ENCODE measurements at regions of chr20 and their contacts with region 1.

Region 1: GRCh38 chr20:44747166-44748004 is 1.7 kb downstream of the KCNK15 start:
- DNase-seq: peak; percentile 75 to 81
- ATAC-seq: peak; percentile 61 to 80 (median 70)
- H3K4me3 ChIP-seq: no peak overlapping the region
- H3K27ac ChIP-seq: no peak overlapping the region
- H3K4me1 ChIP-seq: peaks cover 11% of the 10 kb centered on the region
- H3K27me3 ChIP-seq: peaks cover 0 to 44% (median 4%) of the 10 kb centered on the region in 3 donors
- CTCF ChIP-seq: peak; percentile 56

Region 2: DNA sequence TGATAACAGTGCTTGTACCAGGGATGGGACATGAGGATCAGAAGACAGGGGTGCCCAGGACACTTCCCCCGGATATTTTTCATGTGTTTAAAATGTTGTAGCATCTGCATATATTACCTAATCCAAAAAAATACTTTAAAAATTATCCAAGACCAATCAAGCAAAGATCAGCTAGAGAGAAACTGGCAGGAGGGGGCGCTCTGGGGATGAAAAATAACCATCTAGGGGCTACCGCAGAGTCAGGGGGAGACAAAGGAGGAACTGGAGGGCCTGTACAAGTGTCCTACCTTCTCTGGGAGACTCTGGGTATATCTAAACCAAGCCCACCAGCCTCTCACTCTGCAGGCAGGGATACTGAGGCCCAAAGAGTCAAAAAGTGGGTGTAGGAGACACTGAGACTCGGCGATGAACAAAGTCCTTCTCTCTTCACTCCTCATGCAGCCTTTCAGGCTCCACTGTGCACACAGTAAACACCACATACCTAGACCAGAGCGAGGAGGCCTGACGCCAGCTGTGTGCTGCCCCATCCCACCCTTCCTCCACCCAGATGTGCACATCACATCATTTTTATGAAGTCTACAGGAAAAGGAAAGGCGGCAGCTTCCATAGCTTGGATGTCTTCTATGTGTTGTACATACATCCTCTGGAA is 53.1 kb after region 1 on chr20:
- intact Hi-C with region 1: loop called in 1 of 2 experiments (anchors 5 kb)
- DNase-seq: no peak
- ATAC-seq: no peak
- H3K4me3 ChIP-seq: no peak overlapping the region
- H3K27ac ChIP-seq: no peak overlapping the region
- H3K4me1 ChIP-seq: peaks cover 6% of the 10 kb centered on the region
- H3K27me3 ChIP-seq: peaks cover 0 to 3% (median 2%) of the 10 kb centered on the region in 3 donors
- CTCF ChIP-seq: no peak

Region 3: GRCh38 chr20:44810391-44811149 is 63.2 kb after region 1 on chr20 and contains the start of gene RIMS4:
- intact Hi-C with region 1: loop called in 1 of 2 experiments (anchors 5 kb)
- DNase-seq: no peak
- ATAC-seq: peak in 2 of 4 donors; percentile 41 to 43
- H3K4me3 ChIP-seq: peak within 1 kb of the TSS; percentile 51
- H3K27ac ChIP-seq: no peak within 1 kb of the TSS
- H3K4me1 ChIP-seq: peaks cover 11% of the 10 kb centered on the region
- H3K27me3 ChIP-seq: peaks cover 0 to 42% (median 11%) of the 10 kb centered on the region in 3 donors
- CTCF ChIP-seq: no peak
- total RNA-seq, gene RIMS4: 0.16 to 0.73 (median 0.39) TPM

Region 4: GRCh38 chr20:44866703-44867335 is 119.4 kb after region 1 on chr20:
- intact Hi-C with region 1: loop called (anchors 1 to 2 kb)
- DNase-seq: no peak
- ATAC-seq: no peak
- H3K4me3 ChIP-seq: no peak overlapping the region
- H3K27ac ChIP-seq: no peak overlapping the region
- H3K4me1 ChIP-seq: peaks cover 7% of the 10 kb centered on the region
- H3K27me3 ChIP-seq: no peaks in the 10 kb centered on the region
- CTCF ChIP-seq: no peak